ENCODE measurements at regions of chr1 and their contacts with region 1.

Region 1: GRCh38 chr1:51418384-51418959 is 88.1 kb upstream of the TTC39A start:
- DNase-seq: no peak
- H3K4me3 ChIP-seq: no peak overlapping the region
- H3K27ac ChIP-seq: no peak overlapping the region
- H3K4me1 ChIP-seq: no peaks in the 10 kb centered on the region
- H3K27me3 ChIP-seq: no peaks in the 10 kb centered on the region
- CTCF ChIP-seq: no peak

Region 2: DNA sequence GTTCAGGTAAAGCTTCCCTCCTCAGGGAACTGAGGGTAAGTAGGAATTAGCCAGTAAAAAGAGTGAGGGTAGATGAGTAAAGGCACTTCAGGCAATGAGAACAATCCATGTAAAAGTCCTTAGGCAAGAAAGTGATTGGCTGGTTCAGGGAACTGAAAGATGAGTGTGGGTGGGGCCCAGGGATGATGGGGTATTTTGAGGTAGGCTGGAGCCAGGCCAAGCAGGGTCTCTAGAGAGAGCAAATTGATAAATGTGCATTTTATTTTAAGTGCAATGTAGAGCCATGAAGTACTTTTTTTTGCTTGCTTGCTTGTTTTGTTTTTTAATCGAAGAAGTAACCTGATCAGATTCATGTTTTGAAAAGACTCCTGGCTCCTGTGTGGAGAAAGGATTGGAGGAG is 224.9 kb after region 1 on chr1:
- CTCF ChIA-PET with region 1: no interaction called
- POLR2A ChIA-PET with region 1: interaction called, 26 read pairs
- intact Hi-C with region 1: no loop called
- DNase-seq: no peak
- H3K4me3 ChIP-seq: no peak overlapping the region
- H3K27ac ChIP-seq: 0 out of 2 replicates have a peak overlapping the region, but pooled peaks have one; percentile 35
- H3K4me1 ChIP-seq: peaks cover 52% of the 10 kb centered on the region
- H3K27me3 ChIP-seq: no peaks in the 10 kb centered on the region
- CTCF ChIP-seq: no peak

Region 3: GRCh38 chr1:51693419-51694155 is 275.1 kb after region 1 on chr1:
- CTCF ChIA-PET with region 1: interaction called, 12 read pairs
- POLR2A ChIA-PET with region 1: no interaction called
- intact Hi-C with region 1: no loop called
- DNase-seq: peak in 1 of 2 experiments; percentile 52
- H3K4me3 ChIP-seq: no peak overlapping the region
- H3K27ac ChIP-seq: 0 out of 2 replicates have a peak overlapping the region, but pooled peaks have one; percentile 5
- H3K4me1 ChIP-seq: peaks cover 46% of the 10 kb centered on the region
- H3K27me3 ChIP-seq: no peaks in the 10 kb centered on the region
- CTCF ChIP-seq: no peak